Right ventricle myocardium superior (tissue), 1 donor: ENCODE measurements at regions of chr7 and their contacts with region 1.

Region 1: DNA sequence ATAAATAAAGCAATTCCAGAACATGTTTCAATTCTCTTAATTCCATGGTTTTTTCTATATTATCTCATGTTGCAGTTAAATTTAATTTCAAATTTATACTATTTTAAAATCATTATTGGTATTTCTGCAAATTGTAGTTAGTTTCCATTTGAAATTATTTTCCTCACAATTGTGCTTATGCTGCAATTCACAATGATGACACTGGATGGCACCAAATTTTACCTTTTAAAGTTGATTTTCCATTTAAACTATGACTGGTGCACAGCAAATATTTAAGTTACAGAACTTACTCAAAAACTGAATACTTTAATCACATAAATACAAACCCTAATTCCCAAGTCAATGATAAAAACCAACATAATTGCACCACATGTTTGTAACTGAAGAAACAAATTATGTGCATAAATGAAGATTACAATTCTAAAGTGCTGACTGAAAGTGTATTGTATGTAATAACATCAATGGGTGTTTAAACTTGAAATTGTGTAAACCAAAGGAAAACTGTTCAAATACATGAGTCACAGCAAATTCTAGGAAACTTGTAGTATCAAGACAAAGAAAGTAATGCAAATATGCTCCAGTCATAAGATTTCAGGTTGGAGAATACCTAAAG is 75.3 kb upstream of the AASS start:
- DNase-seq: no peak
- ATAC-seq: no peak

Region 2: DNA sequence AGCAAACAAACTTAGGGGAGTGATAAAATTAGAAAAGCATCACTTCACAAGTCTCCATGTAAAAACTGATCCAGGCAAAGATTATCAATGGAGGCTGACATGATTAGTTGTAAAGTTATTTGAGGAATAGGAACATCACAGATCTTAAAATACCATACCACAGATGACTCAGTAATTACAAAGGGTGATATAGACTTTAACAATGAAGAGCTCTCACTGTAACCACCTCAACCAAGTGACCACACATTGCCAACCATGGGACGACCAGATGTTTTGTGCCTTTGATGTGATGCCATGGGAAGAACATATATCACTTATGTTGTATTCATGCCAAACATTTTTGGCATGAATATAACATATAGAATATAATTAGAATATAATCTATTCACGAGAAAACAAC is 87.0 kb before region 1 on chr7:
- intact Hi-C with region 1: no loop called
- DNase-seq: no peak
- ATAC-seq: no peak

Region 3: DNA sequence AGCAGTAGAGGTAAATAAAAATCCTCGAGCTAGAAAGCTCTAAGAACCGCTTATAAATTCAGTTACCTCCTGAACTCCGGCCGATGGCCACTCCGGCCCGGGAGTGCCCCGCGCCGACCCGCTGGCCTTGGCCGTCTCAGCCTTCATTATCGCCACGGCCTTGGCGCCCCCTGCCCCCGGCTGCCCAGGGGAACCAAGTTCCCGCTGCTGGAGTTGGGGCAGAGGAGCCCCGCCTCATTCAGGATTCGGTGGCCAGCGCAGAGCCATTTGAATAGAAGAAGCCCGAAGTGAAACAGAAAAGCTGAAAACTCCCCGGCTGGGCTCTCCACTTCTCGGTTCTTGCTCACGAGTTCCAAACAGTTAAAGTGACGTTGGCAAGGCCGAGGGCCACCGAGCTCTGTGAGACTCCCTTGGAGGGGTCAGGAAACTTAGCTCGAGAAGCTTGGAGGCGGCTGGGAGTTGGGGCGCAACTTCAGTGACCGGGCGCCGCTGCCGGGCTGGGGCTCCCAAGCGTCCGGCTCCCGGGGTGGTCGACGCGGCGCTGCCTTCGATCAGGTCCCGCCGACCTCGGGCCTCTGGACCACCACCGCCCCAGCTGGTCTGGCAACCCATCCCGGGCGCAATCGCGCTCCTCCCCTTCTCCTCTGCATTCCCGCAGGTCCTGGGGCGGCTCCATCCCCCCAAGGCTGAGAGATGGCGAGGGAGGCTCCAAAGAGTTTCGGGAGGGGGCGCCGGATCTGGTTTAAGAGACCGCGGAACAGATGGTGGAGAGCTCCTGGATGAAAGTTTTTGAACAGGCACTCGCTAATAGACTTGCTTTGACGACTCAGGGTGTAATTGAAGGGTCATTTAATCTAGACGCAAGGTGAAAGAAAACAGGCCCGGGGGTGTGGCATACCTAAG is 91.0 kb after region 1 on chr7:
- intact Hi-C with region 1: no loop called
- DNase-seq: peak; percentile 38
- ATAC-seq: no peak

Region 4: GRCh38 chr7:122364761-122365280 is 145.5 kb after region 1 on chr7:
- intact Hi-C with region 1: no loop called
- DNase-seq: no peak
- ATAC-seq: no peak

Region 5: DNA sequence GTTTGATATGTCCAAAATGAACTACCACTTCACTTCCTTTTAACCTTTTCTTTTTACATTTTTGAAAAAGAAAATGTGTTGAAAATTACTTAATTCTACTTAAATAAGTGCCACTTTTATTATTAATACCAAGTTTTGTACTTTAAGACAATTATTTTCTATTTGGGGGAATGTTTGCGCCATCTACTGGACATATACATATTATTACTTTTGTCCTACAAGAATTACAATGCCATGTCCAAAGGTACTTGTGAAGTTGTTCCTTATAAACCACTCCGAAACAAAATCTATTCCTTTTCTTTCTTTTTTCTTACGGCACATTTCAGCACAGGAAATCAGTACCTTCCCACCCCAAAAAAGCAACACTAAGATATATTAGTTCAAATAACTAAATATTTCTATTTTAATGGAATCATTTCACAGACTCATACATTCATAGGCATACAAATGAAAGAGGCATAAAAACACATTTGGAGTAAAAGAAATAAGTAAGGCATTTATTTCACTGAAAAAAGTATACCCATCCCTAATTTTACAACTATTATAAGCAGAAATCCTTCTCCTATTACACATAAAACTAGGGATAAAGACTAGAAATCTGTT is 309.6 kb after region 1 on chr7:
- intact Hi-C with region 1: loop called (anchors 5 kb)
- DNase-seq: no peak
- ATAC-seq: no peak